Activated CD8-positive, alpha-beta T cell treated with anti-CD3 and anti-CD28 coated beads, Interleukin-2, amount 10 ng/mL, durations not matched to agents 7 days and 5 days (primary cell): ENCODE measurements at regions of chr1 and their contacts with region 1.

Region 1: DNA sequence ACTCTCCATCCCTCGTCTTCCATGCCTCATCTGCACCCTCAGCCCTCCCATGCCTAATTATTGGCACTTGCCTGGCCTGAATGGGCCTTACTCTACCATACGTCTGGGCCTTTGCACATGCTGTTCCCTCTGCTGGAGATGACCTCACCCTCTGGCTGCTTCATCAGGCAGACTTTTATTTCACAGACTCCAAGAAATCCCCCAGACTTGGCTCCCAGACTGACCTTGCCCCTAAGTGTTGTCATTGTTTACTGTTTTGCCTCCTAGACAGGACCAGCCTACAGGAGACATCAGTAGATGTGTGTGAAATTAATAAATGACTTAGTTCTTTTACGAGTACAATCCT is 5.2 kb upstream of the AHDC1 start:
- DNase-seq: no peak
- ATAC-seq: no peak
- H3K4me3 Mint-ChIP-seq: no peak overlapping the region
- H3K27ac Mint-ChIP-seq: no peak overlapping the region
- H3K4me1 Mint-ChIP-seq: peaks cover 33% of the 10 kb centered on the region
- H3K27me3 Mint-ChIP-seq: no peaks in the 10 kb centered on the region

Region 2: DNA sequence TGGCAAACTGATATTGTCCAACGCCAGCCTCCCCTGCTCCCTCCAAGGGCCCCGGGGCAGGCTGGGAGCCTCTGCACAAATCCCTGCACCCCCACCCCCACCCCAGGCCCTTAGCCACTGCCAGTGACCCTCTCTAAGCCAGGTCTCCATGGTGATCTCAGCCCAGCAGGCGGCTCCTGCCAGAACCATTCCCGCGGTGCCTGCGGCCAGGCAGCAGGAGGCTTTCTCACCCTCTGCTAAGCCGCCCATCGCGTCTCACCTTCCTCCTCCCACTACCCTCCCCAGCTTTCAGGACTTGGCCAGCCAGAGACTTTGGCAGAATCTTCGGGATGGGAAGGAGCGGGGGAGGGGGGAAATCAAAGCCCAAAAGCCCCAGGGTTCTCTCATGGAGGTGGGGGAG is 72.4 kb before region 1 on chr1:
- CTCF ChIA-PET with region 1: no interaction called
- POLR2A ChIA-PET with region 1: no interaction called
- DNase-seq: no peak
- ATAC-seq: no peak
- H3K4me3 Mint-ChIP-seq: no peak overlapping the region
- H3K27ac Mint-ChIP-seq: no peak overlapping the region
- H3K4me1 Mint-ChIP-seq: peaks cover 24% of the 10 kb centered on the region
- H3K27me3 Mint-ChIP-seq: no peaks in the 10 kb centered on the region

Region 3: DNA sequence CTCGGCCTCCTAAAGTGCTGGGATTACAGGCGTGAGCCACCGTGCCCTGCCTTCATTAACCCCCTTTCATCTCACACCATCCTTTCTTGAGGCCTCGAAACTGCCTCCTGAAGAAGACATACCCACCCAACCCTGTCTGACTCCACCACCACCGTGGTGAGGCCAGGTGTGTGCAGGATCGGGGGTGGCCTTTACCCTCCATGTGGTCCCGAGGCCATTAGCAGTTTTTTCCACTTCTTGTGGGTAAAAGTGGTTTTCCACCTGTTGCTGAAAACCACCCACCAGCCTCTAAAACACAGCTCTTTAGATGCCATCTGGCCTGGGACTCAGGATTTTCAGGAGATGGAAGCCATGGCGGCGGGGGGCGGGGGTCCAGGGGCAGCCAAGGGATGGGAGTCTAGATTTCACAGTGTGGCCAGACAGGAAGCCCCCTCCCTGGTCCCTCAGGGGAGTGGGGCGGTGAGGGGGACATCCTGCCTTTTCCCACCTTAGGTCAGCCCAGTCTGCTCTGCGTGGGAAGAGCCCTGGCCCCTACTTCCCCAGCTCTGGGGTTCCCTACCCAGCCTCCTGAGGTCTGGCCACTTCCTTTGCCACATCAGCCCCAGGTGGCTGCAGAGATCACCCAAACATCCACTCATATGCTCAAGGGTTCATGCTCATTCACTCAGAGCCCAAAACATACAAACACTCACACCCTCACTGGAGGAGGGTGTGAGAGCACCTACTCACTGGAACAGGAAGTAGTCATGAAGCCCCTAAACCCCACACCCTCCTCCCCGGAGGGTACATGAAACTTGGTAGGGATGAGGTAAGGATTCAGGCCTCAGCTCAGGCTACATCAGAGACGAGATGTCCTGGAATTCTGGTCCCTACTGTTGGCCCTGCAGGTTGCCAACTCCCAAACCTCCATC is 23.5 kb after region 1 on chr1:
- CTCF ChIA-PET with region 1: interaction called, 19 read pairs
- POLR2A ChIA-PET with region 1: interaction called, 4 read pairs
- DNase-seq: peak; percentile 77
- ATAC-seq: peak; percentile 72
- H3K4me3 Mint-ChIP-seq: peak overlapping the region; percentile 55
- H3K27ac Mint-ChIP-seq: peak overlapping the region; percentile 75
- H3K4me1 Mint-ChIP-seq: peaks cover 76% of the 10 kb centered on the region
- H3K27me3 Mint-ChIP-seq: peaks cover 7% of the 10 kb centered on the region

Region 4: DNA sequence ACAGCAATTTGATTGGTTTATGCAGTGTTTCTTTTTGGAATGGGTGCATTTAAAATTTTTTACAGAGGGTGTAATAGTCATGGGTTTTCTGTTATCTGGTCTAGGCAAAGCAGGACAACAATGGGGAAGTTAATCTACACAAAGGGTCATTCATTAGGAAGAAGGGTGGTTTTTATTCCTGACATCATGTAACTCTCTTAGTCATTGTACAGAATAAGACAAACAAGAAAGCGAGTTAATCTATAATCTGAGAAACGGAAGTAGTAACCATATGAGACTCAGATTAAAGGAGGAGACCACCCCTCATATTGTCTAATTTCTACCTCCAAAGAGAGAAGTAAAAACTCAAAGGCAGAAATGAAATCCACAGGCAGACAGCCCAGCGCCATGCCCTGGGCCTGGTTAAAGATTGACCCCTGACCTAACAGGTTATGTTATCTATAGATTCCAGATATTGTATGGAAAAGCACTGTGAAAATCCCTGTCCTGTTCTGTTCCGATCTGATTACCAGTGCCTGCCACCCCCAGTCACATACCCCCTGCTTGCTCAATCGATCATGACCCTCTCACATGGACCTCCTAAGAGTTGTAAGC is 73.3 kb after region 1 on chr1:
- CTCF ChIA-PET with region 1: no interaction called
- POLR2A ChIA-PET with region 1: no interaction called
- DNase-seq: no peak
- ATAC-seq: no peak
- H3K4me3 Mint-ChIP-seq: no peak overlapping the region
- H3K27ac Mint-ChIP-seq: no peak overlapping the region
- H3K4me1 Mint-ChIP-seq: no peaks in the 10 kb centered on the region
- H3K27me3 Mint-ChIP-seq: peaks cover 7% of the 10 kb centered on the region